Ascending aorta (tissue), 2 donors: ENCODE measurements at regions of chr5 and their contacts with region 1.

Region 1: DNA sequence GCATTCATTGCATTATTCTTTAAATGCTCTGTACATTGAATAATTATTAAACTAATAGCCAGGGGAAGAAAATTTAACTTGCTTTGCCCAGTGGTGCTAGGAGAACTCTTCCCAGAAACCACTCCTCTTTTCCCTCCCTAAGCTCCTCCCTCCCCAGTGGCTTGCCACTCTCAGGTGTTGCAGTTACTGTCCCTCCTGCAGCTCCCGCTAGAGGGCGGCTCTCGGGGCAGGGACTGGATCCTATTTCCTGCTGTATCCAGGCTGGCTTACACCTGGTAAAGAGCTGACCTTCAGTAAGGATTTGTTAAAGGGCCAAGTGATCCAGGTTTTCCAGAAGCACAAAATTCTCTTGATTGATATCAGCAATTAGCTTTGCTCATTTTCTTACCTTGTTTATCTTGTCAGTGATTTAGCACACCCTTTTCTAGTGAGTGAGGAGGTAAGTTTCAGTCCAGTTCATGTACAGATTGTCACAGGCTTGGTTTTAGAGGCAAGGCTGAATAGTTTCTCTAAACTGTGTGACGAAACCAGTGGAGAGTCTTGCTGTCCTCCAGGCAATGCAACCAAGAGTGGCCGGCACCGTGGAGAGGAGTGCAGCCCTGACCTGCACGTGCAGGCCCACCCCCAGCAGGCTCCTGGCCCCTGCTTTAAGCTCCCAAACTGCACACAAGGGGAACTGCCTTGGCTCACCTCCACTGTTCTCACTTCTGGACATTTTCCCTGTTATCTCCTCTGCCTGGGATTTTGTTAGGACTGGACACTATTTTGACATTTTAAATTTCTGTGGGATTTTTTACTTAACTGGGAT is 423.8 kb downstream of the SPOCK1 start:
- DNase-seq: no peak
- H3K4me3 ChIP-seq: no peak overlapping the region
- H3K27ac ChIP-seq: no peak overlapping the region
- H3K4me1 ChIP-seq: peaks cover 3 to 13% of the 10 kb centered on the region in 2 donors
- H3K27me3 ChIP-seq: no peaks in the 10 kb centered on the region
- CTCF ChIP-seq: no peak

Region 2: GRCh38 chr5:137142764-137143605 is 67.6 kb after region 1 on chr5:
- intact Hi-C with region 1: loop called (anchors 1 kb)
- DNase-seq: peak in 1 of 2 donors; percentile 85
- H3K4me3 ChIP-seq: no peak overlapping the region
- H3K27ac ChIP-seq: peak overlapping the region; percentile 46 to 73
- H3K4me1 ChIP-seq: peaks cover 6 to 34% of the 10 kb centered on the region in 2 donors
- H3K27me3 ChIP-seq: no peaks in the 10 kb centered on the region
- CTCF ChIP-seq: no peak